ENCODE measurements at regions of chr6 and their contacts with region 1.

Region 1: DNA sequence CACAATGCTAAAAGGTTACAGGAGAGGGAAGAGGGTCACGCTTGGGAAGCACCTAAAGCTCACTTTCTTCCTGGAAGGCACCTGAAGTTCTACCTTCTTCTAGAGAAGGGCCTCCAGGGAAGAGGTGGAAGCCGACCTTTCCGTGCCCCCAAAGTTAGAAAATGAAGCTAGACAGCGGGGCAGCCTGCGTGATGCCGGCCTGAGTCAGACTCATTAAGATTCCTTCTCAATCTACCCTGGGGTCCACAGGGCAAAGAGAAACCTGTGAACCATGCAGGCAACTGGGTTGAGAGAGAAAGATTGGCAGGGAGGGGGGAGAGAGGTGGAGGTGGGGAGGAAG is 54.8 kb upstream of the CCDC167 start:
- DNase-seq: no peak
- ATAC-seq: peak; percentile 19
- H3K4me3 Mint-ChIP-seq: peak overlapping the region; percentile 61
- H3K27ac Mint-ChIP-seq: peak overlapping the region; percentile 79
- H3K4me1 Mint-ChIP-seq: peaks cover 81% of the 10 kb centered on the region
- H3K27me3 Mint-ChIP-seq: no peaks in the 10 kb centered on the region
- CTCF ChIP-seq: no peak

Region 2: DNA sequence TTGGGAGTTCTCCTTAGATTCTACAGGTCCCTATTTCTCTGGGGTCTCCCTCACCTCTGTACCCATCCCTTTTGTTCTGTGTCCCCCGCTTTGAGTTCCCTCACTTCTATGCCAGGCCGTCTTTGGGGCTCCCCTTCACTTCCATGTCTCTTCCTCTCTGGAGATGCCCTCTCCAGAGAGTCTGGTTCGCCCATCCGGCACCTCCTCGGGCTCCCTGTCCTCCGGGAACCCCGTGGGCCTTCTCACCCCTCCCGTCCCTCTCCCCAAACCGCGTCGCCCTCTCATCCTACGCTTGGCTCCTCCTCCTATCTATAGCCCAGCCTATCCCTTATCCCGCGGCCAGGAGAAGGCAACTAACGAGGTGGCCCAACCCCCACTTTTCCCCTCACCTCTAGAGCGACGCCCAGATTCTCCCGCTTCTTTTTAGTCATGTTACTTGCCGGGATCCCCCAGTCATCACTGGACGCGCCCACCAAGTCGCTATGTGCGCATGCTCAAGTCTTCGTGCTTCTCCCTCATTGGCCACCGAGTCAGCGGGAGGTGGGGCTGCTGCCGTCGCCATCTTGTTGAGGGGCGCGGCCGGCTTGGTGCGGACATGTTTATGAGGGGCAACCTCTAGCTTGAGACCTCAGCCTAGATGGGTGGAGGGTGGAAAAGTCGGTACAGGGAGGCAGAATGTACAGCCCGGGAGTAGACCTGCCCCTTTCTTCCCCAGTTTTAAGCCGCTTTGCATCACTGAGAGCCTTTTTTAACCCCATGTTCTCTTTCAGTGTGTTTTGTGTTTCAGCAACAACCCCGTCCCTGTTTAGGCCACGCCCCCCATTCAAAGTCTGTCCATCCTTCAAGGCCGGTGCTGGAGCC is 54.8 kb before region 1 on chr6 and contains the start of gene CCDC167:
- CTCF ChIA-PET with region 1: no interaction called
- POLR2A ChIA-PET with region 1: interaction called, 9 read pairs
- intact Hi-C with region 1: loop called (anchors 1 kb)
- DNase-seq: peak; percentile 86
- ATAC-seq: peak; percentile 96
- H3K4me3 Mint-ChIP-seq: peak within 1 kb of the TSS; percentile 96
- H3K27ac Mint-ChIP-seq: peak within 1 kb of the TSS; percentile 82
- H3K4me1 Mint-ChIP-seq: peaks cover 65% of the 10 kb centered on the region
- H3K27me3 Mint-ChIP-seq: no peaks in the 10 kb centered on the region
- CTCF ChIP-seq: no peak
- total RNA-seq, gene CCDC167: 18.4 and 25.9 TPM in 2 replicates

Region 3: GRCh38 chr6:37538107-37538506 is 16.3 kb before region 1 on chr6:
- CTCF ChIA-PET with region 1: interaction called, 12 read pairs
- POLR2A ChIA-PET with region 1: interaction called, 7 read pairs
- intact Hi-C with region 1: loop called (anchors 2 kb)
- DNase-seq: no peak
- ATAC-seq: peak; percentile 27
- H3K4me3 Mint-ChIP-seq: no peak overlapping the region
- H3K27ac Mint-ChIP-seq: peak overlapping the region; percentile 26
- H3K4me1 Mint-ChIP-seq: peaks cover 16% of the 10 kb centered on the region
- H3K27me3 Mint-ChIP-seq: peaks cover 20% of the 10 kb centered on the region
- CTCF ChIP-seq: no peak

Measured in activated B cell treated with CpG ODN at 0.5 μM for 24 hours (primary cell).